Ascending aorta (tissue), 2 donors: ENCODE measurements at regions of chr14 and their contacts with region 1.

Region 1: DNA sequence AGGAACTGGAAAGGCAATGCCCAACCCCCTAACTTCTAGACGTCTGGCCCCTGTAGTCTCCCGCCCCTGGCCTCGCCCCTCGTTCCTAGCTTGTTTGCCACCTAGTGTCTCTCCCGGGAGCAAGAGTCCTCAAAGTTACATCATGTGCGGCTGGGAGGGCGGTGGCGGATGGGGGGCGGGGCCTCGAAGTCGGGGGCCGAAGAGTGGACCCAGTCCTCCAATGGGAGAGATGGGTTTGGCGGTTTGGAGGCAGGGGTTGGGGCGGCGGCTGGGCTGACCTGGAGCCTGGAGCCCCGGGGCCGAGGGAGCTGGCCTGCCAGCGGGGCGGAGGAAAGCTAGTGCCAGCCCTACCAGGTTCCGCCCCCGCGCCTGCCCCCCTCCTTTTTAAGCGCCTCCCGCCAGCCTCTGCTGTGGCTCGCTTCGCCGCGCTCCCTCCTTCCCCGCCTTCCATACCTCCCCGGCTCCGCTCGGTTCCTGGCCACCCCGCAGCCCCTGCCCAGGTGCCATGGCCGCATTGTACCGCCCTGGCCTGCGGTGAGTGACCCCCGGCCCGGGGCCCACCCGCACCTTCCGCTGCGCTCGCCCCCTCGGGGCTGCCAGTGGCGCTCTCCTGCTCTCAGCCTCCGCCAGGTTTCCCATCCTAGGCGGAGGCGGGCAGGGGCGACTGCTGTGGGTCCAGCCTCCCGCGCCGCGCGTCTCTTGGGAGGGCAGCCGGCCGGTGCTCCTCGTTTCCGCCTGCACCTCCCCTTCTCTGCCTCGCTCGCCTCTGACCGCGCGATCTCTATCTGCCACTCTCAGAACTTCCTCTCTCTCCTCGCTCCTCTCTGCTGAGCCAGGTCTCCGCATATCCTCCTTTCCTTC is at the start of gene PCK2:
- DNase-seq: peak; percentile 83 to 97
- H3K4me3 ChIP-seq: peak within 1 kb of the TSS; percentile 72 to 81
- H3K27ac ChIP-seq: peak within 1 kb of the TSS; percentile 92 to 95
- H3K4me1 ChIP-seq: peaks cover 0 to 11% of the 10 kb centered on the region in 2 donors
- H3K27me3 ChIP-seq: no peaks in the 10 kb centered on the region
- CTCF ChIP-seq: peak in 1 of 3 experiments; percentile 24
- total RNA-seq, gene PCK2: 26.1 TPM

Region 2: GRCh38 chr14:23555882-23556699 is 538.0 kb before region 1 on chr14 and contains the start of gene THTPA:
- intact Hi-C with region 1: loop called (anchors 5 kb)
- DNase-seq: peak; percentile 71 to 96
- H3K4me3 ChIP-seq: peak within 1 kb of the TSS; percentile 85 to 89
- H3K27ac ChIP-seq: peak within 1 kb of the TSS; percentile 92 to 97
- H3K4me1 ChIP-seq: peaks cover 5 to 25% of the 10 kb centered on the region in 2 donors
- H3K27me3 ChIP-seq: no peaks in the 10 kb centered on the region
- CTCF ChIP-seq: no peak
- total RNA-seq, gene THTPA: 115 TPM

Region 3: DNA sequence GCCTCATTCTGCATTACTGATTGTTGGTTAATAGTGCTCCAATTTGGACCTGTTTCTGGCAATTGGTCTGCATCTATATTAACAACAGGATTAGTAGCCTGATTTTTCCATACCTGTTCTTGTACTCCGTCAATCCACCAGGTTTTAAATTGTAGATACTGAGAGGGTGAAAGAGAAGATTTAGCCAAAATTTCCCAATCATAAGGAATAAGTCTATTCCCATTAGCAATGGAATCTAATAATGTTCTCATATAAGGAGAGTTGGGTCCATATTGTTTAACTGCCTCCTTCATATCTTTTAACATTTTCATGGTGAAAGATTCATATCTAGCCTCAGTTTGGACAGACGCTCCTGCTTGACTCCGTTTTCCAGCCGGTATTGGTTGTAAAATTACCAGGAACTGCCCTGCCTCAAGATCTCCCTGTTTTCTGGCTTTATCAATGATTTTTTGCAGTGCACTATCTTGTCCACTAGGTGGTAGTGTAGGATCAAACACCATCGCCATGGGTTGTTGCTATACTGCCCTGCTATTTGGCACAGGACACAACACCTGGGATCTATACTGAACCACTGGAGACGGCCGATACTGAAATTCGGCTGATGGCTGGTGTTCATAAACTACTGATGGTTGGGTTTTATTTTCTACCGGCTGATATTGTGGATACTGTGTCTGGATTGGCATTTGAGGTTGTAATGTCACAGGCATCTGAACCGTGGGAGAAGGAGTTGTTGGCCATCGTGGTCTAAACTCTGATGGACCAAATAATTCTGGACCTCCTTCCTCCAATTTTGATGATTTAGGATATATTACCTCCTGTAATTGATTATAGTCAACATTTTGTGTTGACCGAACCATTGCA is 80.2 kb before region 1 on chr14:
- intact Hi-C with region 1: loop called (anchors 1 kb)
- DNase-seq: no peak
- H3K4me3 ChIP-seq: no peak overlapping the region
- H3K27ac ChIP-seq: no peak overlapping the region
- H3K4me1 ChIP-seq: peaks cover 0 to 4% of the 10 kb centered on the region in 2 donors
- H3K27me3 ChIP-seq: no peaks in the 10 kb centered on the region
- CTCF ChIP-seq: peak; percentile 74 to 93 (median 82)

Region 4: GRCh38 chr14:24058260-24058950 is 35.7 kb before region 1 on chr14:
- intact Hi-C with region 1: loop called (anchors 1 kb)
- DNase-seq: peak in 1 of 2 donors; percentile 86
- H3K4me3 ChIP-seq: no peak overlapping the region
- H3K27ac ChIP-seq: no peak overlapping the region
- H3K4me1 ChIP-seq: no peaks in the 10 kb centered on the region
- H3K27me3 ChIP-seq: no peaks in the 10 kb centered on the region
- CTCF ChIP-seq: peak; percentile 61 to 92 (median 91)

Region 5: GRCh38 chr14:24108336-24108874 is 14.3 kb after region 1 on chr14:
- intact Hi-C with region 1: loop called (anchors 1 kb)
- DNase-seq: no peak
- H3K4me3 ChIP-seq: no peak overlapping the region
- H3K27ac ChIP-seq: no peak overlapping the region
- H3K4me1 ChIP-seq: peaks cover 0 to 6% of the 10 kb centered on the region in 2 donors
- H3K27me3 ChIP-seq: no peaks in the 10 kb centered on the region
- CTCF ChIP-seq: no peak